ENCODE measurements at regions of chr1 and their contacts with region 1.

Region 1: DNA sequence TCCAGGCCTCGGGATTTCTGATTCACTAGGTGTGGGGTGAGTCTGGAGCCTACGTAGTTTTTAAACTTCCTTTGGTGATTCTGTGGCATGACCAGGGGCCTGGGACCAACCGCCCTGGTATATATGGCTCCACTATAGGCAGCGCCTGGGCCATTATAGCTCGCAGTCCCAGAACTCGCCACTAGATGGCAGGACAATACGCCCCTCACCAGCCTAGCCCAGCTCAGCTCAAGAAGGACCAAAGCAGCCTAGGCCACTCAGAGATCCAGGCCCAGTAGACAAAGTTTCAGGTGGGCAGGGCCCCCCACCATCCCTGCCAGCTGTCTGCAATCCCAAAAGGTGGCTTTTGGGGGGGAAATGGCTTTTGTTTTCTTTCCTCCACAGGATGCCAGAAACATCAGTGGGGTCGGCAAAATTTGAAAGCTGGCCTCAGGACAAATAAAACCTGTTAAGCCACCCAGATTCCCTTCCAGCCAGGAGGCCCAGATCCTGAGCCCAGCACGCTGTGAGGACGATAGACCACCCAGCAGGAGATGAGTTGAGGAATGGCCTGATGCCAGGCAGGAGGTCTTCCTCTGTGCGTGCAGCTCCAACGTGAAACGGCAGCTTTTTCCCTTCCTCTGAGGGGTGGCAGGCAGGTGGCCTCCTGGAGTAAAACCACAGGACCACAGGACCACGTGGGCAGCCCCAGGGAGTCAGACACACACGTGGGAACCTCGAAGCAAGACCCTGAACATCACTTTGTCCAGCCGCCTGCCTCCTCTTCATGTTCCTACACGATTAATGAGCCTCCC is 24.8 kb upstream of the TMEM51 start:
- DNase-seq: peak; percentile 38
- H3K4me3 ChIP-seq: no peak overlapping the region
- CTCF ChIP-seq: peak; percentile 89

Region 2: DNA sequence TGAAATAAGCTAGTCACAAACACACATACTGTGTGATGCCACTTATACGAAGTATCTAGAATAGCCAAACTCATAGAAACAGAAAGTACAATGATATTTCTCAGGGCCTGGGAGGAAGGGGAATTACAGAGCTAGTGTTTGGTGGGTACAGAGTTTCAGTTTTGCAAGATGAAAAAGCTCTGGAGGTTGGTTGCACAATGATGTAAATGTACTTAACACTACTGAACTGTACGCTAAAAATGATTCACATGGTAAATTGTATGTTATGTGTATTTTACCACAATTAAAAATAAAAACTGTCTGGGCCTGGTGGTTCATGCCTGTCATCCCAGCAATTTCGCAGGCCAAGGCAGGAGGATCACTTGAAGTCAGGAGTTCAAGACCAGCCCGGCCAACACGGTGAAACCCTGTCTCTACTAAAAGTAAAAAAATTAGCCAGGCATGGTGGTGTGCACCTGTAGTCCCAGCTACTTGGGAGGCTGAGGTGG is 103.0 kb after region 1 on chr1:
- in situ Hi-C with region 1: no loop called
- DNase-seq: no peak
- H3K4me3 ChIP-seq: no peak overlapping the region
- CTCF ChIP-seq: no peak

Region 3: GRCh38 chr1:15283526-15283925 is 154.8 kb after region 1 on chr1:
- in situ Hi-C with region 1: loop called (anchors 25 kb)
- DNase-seq: no peak
- H3K4me3 ChIP-seq: no peak overlapping the region
- CTCF ChIP-seq: peak; percentile 32

Region 4: GRCh38 chr1:15430787-15431570 is 302.3 kb after region 1 on chr1:
- in situ Hi-C with region 1: loop called (anchors 25 kb)
- DNase-seq: no peak
- H3K4me3 ChIP-seq: no peak overlapping the region
- CTCF ChIP-seq: peak; percentile 93

Measured in astrocyte of the cerebellum (primary cell).